MCF 10A (cell line): ENCODE measurements at regions of chr3 and their contacts with region 1.

Region 1: DNA sequence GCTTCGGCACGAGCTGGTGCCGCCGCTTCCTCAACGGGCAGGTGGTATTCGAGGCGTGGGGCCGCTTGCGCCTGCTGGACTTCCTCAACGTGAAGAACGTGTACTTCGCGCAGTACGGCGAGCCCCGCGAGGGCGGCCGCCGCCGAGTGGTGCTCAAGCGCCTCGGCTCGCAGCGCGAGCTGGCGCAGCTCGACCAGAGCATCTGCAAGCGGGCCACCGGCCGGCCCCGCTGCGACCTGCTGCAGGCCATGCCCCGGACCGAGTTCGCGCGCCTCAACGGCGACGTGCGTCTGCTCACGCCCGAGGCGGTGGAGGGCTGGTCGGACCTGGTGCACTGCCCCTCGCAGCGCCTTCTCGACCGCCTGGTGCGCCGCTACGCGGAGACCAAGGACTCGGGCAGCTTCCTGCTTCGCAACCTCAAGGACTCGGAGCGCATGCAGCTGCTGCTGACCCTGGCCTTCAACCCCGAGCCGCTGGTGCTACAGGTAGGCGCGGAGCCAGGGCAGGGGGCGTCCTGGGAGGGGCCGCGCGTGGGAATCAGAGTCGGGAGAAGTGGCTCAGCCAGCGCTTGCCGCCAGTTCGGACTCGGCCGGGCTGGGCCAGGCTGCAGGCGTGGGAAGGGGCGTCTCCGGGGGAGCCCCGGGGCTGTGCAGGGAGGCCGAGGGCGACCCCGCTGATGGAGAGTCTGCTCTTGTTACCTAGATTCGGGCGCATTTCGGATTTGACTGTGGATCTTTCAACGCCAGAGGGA is 1.1 kb downstream of the DIPK2A start:
- DNase-seq: peak; percentile 89
- H3K4me3 Mint-ChIP-seq: peak overlapping the region; percentile 93
- H3K27ac Mint-ChIP-seq: peak overlapping the region; percentile 98
- H3K4me1 Mint-ChIP-seq: peaks cover 14% of the 10 kb centered on the region
- H3K27me3 Mint-ChIP-seq: no peaks in the 10 kb centered on the region
- CTCF ChIP-seq: peak; percentile 46

Region 2: DNA sequence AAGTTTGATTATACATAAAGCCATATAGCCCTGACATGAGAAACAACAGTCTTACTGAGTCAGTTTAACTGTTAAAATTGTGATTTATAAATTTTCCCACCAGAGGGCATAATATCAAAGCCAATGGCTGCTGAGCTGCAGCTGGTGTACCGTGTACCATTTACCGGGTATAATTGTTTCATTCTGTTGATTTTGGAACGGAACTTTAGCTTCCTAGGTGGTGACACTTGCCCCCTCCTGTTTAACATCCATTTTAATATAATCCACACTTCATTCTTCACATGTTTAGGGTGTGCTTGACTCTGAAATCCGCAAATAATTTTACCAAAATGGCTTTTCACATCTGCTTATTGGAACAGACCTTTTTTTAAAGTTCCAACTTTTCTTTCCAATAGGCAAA is 197.2 kb before region 1 on chr3:
- CTCF ChIA-PET with region 1: interaction called, 6 read pairs
- POLR2A ChIA-PET with region 1: interaction called, 6 read pairs
- intact Hi-C with region 1: loop called (anchors 5 kb)
- DNase-seq: peak; percentile 45
- H3K4me3 Mint-ChIP-seq: no peak overlapping the region
- H3K27ac Mint-ChIP-seq: no peak overlapping the region
- H3K4me1 Mint-ChIP-seq: peaks cover 5% of the 10 kb centered on the region
- H3K27me3 Mint-ChIP-seq: no peaks in the 10 kb centered on the region
- CTCF ChIP-seq: peak; percentile 57

Region 3: DNA sequence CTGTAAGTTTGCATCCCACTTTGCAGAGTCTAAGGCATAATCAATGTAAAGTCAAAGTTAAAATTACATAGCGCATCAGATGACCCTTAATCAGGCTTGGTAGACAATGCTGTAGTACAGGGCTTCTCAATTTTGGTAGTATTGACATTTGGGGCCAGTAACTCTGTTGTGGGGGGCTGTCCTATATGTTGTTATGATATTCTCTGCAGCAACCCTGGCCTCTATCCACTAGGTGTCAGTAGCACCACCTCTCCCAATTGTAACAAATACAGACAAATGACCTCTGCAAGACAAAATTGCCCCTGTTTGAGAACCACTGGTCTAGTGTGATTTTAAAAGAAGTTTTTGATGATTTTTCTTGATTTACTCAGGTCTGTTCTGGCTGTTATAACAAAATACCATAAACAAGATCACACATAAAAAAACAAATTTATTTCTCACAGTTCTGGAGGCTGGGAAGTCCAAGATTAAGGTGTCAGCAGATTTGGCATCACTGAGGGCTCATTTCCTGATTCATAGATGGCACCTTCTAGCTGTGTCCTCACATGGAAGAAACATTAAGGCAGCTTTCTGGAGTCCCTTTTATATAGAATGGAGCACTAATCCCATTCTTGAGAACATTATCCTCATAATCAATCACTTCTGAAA is 86.8 kb before region 1 on chr3:
- CTCF ChIA-PET with region 1: interaction called, 21 read pairs
- POLR2A ChIA-PET with region 1: interaction called, 18 read pairs
- intact Hi-C with region 1: no loop called
- DNase-seq: peak; percentile 65
- H3K4me3 Mint-ChIP-seq: no peak overlapping the region
- H3K27ac Mint-ChIP-seq: no peak overlapping the region
- H3K4me1 Mint-ChIP-seq: peaks cover 11% of the 10 kb centered on the region
- H3K27me3 Mint-ChIP-seq: no peaks in the 10 kb centered on the region
- CTCF ChIP-seq: peak; percentile 76

Region 4: DNA sequence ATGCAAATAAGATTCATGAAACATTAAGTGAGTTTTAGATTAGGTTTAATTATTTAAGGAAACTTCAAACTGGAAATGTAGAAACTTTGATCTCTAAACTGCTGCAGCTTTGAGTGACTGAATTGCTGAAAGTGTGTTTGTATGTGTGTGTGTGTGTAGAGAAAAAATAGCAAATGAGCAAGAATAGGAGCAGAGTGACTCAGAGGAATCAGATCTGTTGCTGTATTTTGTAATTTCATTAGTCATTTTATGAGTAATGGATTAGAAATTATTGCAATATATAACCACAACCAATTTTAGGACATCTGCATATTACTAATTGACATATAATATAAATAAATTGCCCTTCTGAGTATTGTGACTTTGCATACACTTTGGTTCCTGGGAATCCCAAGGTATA is 71.6 kb before region 1 on chr3:
- CTCF ChIA-PET with region 1: interaction called, 11 read pairs
- POLR2A ChIA-PET with region 1: interaction called, 17 read pairs
- intact Hi-C with region 1: loop called (anchors 2 kb)
- DNase-seq: peak; percentile 76
- H3K4me3 Mint-ChIP-seq: no peak overlapping the region
- H3K27ac Mint-ChIP-seq: no peak overlapping the region
- H3K4me1 Mint-ChIP-seq: peaks cover 17% of the 10 kb centered on the region
- H3K27me3 Mint-ChIP-seq: no peaks in the 10 kb centered on the region
- CTCF ChIP-seq: no peak

Region 5: GRCh38 chr3:144162079-144162478 is 189.4 kb after region 1 on chr3:
- CTCF ChIA-PET with region 1: interaction called, 5 read pairs
- POLR2A ChIA-PET with region 1: no interaction called
- intact Hi-C with region 1: loop called (anchors 5 kb)
- DNase-seq: peak; percentile 78
- H3K4me3 Mint-ChIP-seq: no peak overlapping the region
- H3K27ac Mint-ChIP-seq: no peak overlapping the region
- H3K4me1 Mint-ChIP-seq: no peaks in the 10 kb centered on the region
- H3K27me3 Mint-ChIP-seq: no peaks in the 10 kb centered on the region
- CTCF ChIP-seq: no peak

Region 6: GRCh38 chr3:144516026-144516425 is 543.3 kb after region 1 on chr3:
- CTCF ChIA-PET with region 1: no interaction called
- POLR2A ChIA-PET with region 1: no interaction called
- intact Hi-C with region 1: loop called (anchors 10 kb)
- DNase-seq: peak; percentile 1
- H3K4me3 Mint-ChIP-seq: no peak overlapping the region
- H3K27ac Mint-ChIP-seq: no peak overlapping the region
- H3K4me1 Mint-ChIP-seq: no peaks in the 10 kb centered on the region
- H3K27me3 Mint-ChIP-seq: peaks cover 11% of the 10 kb centered on the region
- CTCF ChIP-seq: no peak

Region 7: GRCh38 chr3:144770915-144771351 is 798.3 kb after region 1 on chr3:
- CTCF ChIA-PET with region 1: interaction called, 3 read pairs
- POLR2A ChIA-PET with region 1: no interaction called
- intact Hi-C with region 1: loop called (anchors 1 kb)
- DNase-seq: peak; percentile 38
- H3K4me3 Mint-ChIP-seq: no peak overlapping the region
- H3K27ac Mint-ChIP-seq: no peak overlapping the region
- H3K4me1 Mint-ChIP-seq: no peaks in the 10 kb centered on the region
- H3K27me3 Mint-ChIP-seq: no peaks in the 10 kb centered on the region
- CTCF ChIP-seq: peak; percentile 32